ENCODE measurements at regions of chr5 and their contacts with region 1.

Region 1: DNA sequence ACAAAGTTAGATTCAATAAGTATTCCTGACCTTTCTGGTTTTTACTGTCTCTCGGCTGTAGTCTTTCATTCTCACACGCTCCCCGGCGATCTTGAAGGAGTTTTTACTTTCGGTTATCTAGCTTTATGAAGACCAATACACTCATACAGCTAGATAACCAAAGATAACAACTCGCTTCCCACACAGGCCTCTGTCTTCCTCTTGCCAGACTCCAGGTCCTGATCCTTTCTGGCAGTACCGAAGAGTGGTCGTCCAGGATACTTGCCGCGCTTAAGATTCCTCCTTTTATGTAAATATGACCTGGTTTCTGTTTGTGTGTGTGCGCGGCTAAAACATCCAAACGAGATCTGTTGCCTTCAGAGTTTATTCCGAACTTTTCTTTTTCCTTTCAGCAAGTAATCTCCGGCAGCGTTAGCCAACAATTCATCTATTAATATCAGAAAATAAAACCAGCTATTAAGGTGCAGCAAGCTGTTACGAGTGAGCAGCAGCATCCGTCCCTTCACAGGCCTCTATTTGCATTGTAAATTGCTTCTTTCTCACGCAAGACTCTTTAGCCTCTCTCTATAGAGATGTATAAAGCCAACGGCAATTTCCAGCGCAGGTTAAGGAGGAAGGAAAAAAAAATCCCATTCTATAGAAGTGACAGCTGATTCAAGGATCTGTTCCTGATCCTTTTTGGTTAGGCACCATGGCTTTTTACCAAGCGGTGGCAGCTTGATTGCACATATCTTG is 216.1 kb downstream of the MEF2C start:
- DNase-seq: no peak
- CTCF ChIP-seq: no peak

Region 2: GRCh38 chr5:88536146-88536545 is 130.8 kb before region 1 on chr5:
- CTCF ChIA-PET with region 1: no interaction called
- POLR2A ChIA-PET with region 1: no interaction called
- DNase-seq: no peak
- CTCF ChIP-seq: no peak

Region 3: GRCh38 chr5:88680253-88681132 is 13.6 kb after region 1 on chr5:
- CTCF ChIA-PET with region 1: interaction called, 22 read pairs
- POLR2A ChIA-PET with region 1: no interaction called
- DNase-seq: peak; percentile 86
- CTCF ChIP-seq: peak; percentile 95

Measured in GM10248 (cell line).